Endothelial cell of umbilical vein (primary cell): ENCODE measurements at regions of chr15 and their contacts with region 1.

Region 1: DNA sequence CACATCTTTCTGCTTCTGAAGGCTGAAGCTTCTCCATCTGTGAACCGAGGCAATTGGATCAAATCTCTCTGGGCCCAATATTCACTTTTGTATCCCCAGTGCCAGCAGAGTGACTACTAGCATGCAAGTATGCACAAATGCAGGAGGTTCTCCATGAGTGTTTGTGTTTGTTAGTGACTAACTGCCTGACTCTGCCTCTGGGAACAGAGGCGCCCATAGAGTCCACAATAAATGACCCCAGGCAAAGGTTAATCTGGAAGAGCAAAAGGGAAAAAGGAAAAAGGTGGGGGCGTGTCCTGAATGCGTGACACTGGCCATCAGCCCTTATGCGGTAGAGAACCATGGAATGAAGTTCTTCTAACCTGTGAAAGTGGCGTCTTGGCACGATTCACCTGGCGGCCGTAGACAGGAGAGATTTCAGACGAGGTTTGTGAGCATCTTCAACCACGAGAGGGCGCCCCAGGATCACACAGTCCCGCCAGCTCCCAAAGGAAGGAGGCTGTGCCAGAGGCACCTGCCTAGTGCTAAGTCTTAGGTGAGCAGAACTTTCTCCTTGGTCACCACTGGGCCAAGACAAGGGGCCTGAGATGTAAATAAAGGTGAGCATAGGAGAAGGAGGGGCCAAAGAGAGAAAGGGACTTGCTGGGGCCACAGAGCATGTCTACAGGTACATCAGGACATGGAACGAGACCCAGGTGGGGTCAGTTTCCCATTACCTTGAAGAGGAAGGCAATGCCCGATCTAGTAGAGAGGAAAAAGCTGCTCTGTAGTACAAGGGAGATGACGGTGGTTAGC is 44.2 kb downstream of the RBPMS2 start:
- DNase-seq: peak; percentile 67
- H3K4me3 ChIP-seq: no peak overlapping the region
- H3K27ac ChIP-seq: no peak overlapping the region
- H3K4me1 ChIP-seq: no peaks in the 10 kb centered on the region
- H3K27me3 ChIP-seq: no peaks in the 10 kb centered on the region
- CTCF ChIP-seq: peak; percentile 84 to 87
- POLR2A ChIP-seq: no peak

Region 2: GRCh38 chr15:64381000-64381752 is 350.0 kb before region 1 on chr15 and contains the start of gene PCLAF:
- CTCF ChIA-PET with region 1: no interaction called
- POLR2A ChIA-PET with region 1: no interaction called
- dilution Hi-C with region 1: no loop called
- intact Hi-C with region 1: no loop called
- DNase-seq: peak; percentile 97
- H3K4me3 ChIP-seq: peak within 1 kb of the TSS; percentile 29 to 65 (median 52)
- H3K27ac ChIP-seq: peak within 1 kb of the TSS; percentile 13
- H3K4me1 ChIP-seq: peaks cover 12% of the 10 kb centered on the region
- H3K27me3 ChIP-seq: no peaks in the 10 kb centered on the region
- CTCF ChIP-seq: no peak
- POLR2A ChIP-seq: peak; percentile 50
- total RNA-seq, gene PCLAF: 54.7 and 65.7 TPM in 2 replicates

Region 3: DNA sequence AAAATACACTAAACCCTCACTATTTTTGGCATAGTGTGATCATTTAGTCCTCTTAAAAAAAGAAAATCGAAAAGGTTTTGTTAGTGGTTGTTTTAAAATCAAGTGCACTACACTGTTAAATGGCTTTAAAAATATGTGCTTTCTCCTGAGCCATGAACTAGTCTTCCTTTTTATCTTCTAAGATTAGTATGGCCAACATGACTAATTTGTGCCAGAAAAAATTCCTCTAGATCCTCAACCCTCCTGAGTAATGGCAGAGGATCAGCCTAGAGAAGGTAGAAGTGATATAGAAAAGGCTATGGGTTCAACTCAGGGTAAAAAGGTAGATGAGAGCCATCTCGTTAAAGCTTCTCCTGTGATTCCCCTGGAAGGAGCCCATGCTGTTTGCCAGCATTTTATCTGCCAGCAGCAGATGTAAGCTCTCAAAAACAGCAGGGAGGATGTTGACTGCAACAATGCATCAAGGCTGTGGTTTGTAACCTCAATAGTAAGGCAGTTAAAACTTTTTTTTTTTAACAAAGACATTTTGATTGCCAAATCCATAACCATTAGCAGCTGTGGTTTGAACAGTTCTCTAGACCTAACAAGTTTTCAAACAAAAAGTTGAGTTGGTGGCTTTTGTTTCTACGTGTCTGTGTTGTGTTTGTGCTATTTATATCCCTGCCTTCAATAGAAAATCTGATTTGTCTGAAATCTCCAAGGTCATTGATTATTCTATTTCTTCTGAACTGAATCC is 301.0 kb before region 1 on chr15:
- CTCF ChIA-PET with region 1: interaction called, 41 read pairs
- POLR2A ChIA-PET with region 1: no interaction called
- dilution Hi-C with region 1: no loop called
- intact Hi-C with region 1: loop called (anchors 1 kb)
- DNase-seq: peak; percentile 77
- H3K4me3 ChIP-seq: no peak overlapping the region
- H3K27ac ChIP-seq: no peak overlapping the region
- H3K4me1 ChIP-seq: peaks cover 2% of the 10 kb centered on the region
- H3K27me3 ChIP-seq: no peaks in the 10 kb centered on the region
- CTCF ChIP-seq: no peak
- POLR2A ChIP-seq: no peak

Region 4: DNA sequence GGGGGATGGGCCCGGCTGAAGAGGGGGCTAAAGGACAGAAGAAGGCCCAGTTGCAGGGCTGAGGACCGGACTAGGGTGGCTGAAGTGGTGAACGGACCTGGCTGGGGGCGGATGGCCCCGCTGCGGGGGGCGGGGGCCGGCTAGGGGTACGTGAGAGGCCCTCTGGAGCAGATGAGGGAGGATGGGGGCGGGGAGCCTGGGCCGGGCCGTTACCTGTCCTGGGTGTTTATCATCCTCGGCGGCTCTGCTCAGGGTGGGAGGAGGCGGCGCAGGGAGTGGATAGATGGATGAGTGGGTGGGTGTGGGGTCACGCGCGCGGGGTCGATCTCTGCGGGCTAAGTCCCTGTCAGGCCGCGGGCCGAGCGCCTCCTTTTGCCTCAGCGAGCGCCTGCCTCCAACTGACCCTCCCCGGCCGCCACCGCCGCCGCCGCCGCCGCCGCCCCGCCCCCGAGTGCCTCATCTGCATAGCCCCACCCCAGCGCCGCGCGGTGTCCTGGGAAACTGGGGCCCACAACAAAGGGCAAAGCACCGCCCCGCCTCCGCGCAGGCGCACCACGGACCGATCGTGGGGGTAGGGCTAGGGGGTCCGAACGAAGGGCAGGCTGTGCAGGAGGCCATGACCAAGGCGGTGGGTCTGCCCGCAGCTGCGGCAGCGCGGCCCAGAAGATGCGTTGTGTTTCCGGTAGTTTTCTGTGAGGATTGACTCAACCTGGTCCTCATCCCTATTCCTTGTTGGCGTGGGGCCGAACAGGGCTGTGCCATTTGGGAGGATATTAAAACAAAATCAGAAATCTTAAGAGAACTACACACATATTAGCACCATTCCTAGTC is 28.2 kb before region 1 on chr15:
- CTCF ChIA-PET with region 1: interaction called, 64 read pairs
- POLR2A ChIA-PET with region 1: no interaction called
- dilution Hi-C with region 1: no loop called
- intact Hi-C with region 1: no loop called
- DNase-seq: peak; percentile 94
- H3K4me3 ChIP-seq: peak overlapping the region; percentile 84 to 90 (median 88)
- H3K27ac ChIP-seq: peak overlapping the region; percentile 48
- H3K4me1 ChIP-seq: peaks cover 42% of the 10 kb centered on the region
- H3K27me3 ChIP-seq: no peaks in the 10 kb centered on the region
- CTCF ChIP-seq: no peak
- POLR2A ChIP-seq: peak; percentile 97

Region 5: GRCh38 chr15:64800476-64800875 is 69.3 kb after region 1 on chr15:
- CTCF ChIA-PET with region 1: interaction called, 10 read pairs
- POLR2A ChIA-PET with region 1: no interaction called
- dilution Hi-C with region 1: no loop called
- intact Hi-C with region 1: no loop called
- DNase-seq: no peak
- H3K4me3 ChIP-seq: no peak overlapping the region
- H3K27ac ChIP-seq: no peak overlapping the region
- H3K4me1 ChIP-seq: no peaks in the 10 kb centered on the region
- H3K27me3 ChIP-seq: peaks cover 0 to 2% of the 10 kb centered on the region in 2 experiments
- CTCF ChIP-seq: no peak
- POLR2A ChIP-seq: no peak

Region 6: GRCh38 chr15:64893481-64894394 is 162.5 kb after region 1 on chr15:
- CTCF ChIA-PET with region 1: no interaction called
- POLR2A ChIA-PET with region 1: no interaction called
- dilution Hi-C with region 1: no loop called
- intact Hi-C with region 1: loop called (anchors 5 kb)
- DNase-seq: peak; percentile 98
- H3K4me3 ChIP-seq: peak overlapping the region in 2 of 3 experiments; percentile 20 to 24
- H3K27ac ChIP-seq: peak overlapping the region; percentile 72
- H3K4me1 ChIP-seq: peaks cover 44% of the 10 kb centered on the region
- H3K27me3 ChIP-seq: no peaks in the 10 kb centered on the region
- CTCF ChIP-seq: no peak
- POLR2A ChIP-seq: peak; percentile 69

Region 7: DNA sequence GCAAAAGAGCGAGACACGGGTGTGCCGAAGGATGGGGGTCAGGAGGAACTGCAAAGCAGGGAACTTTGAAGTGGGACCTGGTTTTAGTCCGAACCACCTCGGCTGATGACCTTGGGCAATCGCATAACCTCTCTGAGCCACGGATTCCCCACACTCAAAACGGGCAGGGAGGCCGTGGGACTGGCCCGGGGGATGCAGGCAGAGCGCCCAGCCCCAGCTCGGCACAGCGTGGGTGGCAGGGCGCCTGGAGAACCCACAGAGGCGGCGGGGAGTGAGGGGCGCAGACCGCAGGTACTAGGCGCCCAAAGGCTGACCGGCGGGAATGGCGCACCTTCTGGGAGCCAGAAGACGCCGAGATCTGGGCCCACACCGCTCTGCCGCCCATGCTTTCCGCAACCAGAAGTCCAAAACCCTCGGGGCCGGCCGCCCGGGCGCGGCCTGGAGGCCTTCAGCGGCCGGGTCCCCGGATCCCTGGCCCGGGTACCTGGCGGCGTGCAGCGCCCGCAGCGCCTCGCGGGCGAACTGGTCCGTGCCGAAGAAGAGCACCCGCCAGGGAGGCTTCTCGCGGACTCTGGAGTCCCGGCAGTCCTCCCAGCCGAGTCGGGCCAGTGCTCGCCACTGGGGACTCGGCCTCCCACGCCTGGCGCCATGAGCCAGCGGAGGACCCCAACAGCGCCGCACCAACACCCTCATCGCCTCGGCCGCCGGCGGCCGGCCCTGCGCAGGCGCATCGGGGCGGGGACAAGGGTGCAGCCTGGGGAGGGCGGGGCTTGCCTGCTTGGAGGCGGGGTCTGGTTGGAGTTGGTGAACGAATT is 297.9 kb after region 1 on chr15 and contains the start of gene MTFMT:
- CTCF ChIA-PET with region 1: no interaction called
- POLR2A ChIA-PET with region 1: no interaction called
- dilution Hi-C with region 1: no loop called
- intact Hi-C with region 1: loop called (anchors 2 kb)
- DNase-seq: peak; percentile 80
- H3K4me3 ChIP-seq: peak within 1 kb of the TSS; percentile 70 to 81 (median 73)
- H3K27ac ChIP-seq: peak within 1 kb of the TSS; percentile 16
- H3K4me1 ChIP-seq: peaks cover 8% of the 10 kb centered on the region
- H3K27me3 ChIP-seq: no peaks in the 10 kb centered on the region
- CTCF ChIP-seq: no peak
- POLR2A ChIP-seq: peak; percentile 96
- total RNA-seq, gene MTFMT: 13.6 and 20.4 TPM in 2 replicates

Region 8: GRCh38 chr15:65054333-65055200 is 323.4 kb after region 1 on chr15:
- CTCF ChIA-PET with region 1: no interaction called
- POLR2A ChIA-PET with region 1: no interaction called
- dilution Hi-C with region 1: no loop called
- intact Hi-C with region 1: no loop called
- DNase-seq: peak; percentile 61
- H3K4me3 ChIP-seq: no peak overlapping the region
- H3K27ac ChIP-seq: no peak overlapping the region
- H3K4me1 ChIP-seq: peaks cover 9% of the 10 kb centered on the region
- H3K27me3 ChIP-seq: no peaks in the 10 kb centered on the region
- CTCF ChIP-seq: peak; percentile 91 to 96
- POLR2A ChIP-seq: no peak